Calu3 (cell line): ENCODE measurements at regions of chr2 and their contacts with region 1.

Region 1: DNA sequence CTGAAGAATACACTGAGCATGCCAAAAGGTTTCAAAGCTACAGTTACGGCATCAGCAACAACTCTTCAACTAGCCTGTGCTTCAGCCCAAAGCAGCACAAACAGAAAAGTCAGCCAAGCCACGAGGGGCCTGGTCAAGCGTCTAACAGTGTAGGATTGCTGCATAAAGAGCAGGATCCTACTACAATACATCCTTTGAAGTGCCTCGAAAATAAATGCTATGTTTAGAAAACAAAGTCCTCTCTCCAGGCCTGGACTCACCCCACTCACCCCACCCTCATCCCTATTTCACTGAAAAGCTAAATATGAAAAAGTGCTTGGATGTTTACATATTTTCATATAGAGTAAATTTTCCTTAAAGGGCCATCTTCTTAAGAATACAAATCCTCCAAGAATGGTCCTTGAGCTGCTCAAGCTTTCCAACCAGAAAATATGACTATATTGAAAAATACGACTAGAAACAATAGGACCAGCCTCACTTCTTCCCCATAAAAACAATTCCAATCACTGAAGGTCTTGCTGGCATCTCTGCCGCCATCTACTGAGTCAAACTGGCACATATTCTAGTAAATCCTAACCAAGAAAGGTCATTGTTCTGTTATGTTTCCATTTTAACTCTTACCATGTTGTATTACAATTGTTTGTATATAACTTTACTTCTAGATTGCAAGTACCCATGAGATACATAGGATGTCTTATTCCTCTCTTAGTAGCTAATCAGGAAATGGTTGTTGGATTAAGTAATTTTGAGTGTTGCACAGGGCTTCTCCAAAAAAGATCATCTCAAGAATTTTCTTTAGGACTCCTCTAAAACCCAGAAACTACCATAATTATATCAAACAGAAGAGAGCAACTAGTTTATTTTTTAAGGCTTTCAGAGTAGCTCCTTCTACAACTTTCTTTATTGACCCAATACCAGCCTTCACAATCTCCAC is 63.6 kb downstream of the CLHC1 start:
- DNase-seq: peak; percentile 56
- H3K4me3 Mint-ChIP-seq: no peak overlapping the region
- H3K27ac Mint-ChIP-seq: no peak overlapping the region
- H3K4me1 Mint-ChIP-seq: peaks cover 29% of the 10 kb centered on the region
- H3K27me3 Mint-ChIP-seq: no peaks in the 10 kb centered on the region
- CTCF ChIP-seq: peak; percentile 58

Region 2: DNA sequence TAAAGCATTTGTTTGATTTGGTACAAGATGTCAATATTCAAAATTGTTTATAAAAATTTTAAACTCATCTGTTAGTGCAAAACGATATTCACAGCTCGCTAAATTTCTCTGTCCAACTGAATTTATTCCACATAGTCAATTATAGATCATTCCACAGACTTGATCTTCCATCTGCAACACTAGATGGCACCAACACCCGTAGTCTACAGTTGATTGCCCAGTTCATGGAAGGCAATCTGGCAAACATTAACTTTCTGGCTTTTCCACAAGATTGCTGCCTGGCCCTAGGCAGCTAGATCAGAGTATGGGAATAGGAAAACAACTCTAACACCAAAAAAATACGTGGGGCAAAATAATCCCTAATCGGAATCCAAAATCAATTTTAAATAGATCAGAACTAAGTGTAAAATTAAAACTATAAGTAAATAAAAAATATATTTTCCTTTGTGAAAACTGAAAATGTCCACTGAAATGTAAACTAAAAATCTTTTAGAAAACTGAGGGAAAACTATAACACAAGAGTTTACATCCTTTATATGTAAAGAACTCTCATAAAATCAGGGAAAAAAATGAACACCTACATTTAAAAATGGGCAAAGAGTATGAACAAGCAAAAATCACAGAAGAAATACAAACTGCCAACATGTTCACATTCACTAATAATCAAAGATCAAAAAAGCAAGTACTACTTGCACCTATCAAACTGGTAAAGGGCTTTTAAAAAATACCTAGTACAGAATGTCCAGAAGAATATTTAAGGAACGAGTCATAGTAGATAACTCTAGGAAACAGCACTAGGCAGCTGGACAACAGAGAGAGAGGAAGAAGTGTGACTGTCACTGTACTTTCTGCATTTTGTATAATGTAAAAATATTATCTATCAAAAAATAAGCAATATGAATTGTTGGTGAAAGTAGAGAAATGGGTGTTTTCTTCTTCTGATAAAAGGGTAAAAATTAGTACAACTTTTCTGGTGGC is 153.2 kb before region 1 on chr2:
- CTCF ChIA-PET with region 1: interaction called, 5 read pairs
- intact Hi-C with region 1: loop called (anchors 1 kb)
- DNase-seq: peak; percentile 62
- H3K4me3 Mint-ChIP-seq: peak overlapping the region; percentile 45
- H3K27ac Mint-ChIP-seq: peak overlapping the region; percentile 37
- H3K4me1 Mint-ChIP-seq: peaks cover 59% of the 10 kb centered on the region
- H3K27me3 Mint-ChIP-seq: no peaks in the 10 kb centered on the region
- CTCF ChIP-seq: peak; percentile 56

Region 3: GRCh38 chr2:55050133-55050994 is 118.1 kb before region 1 on chr2 and contains the start of gene RTN4:
- CTCF ChIA-PET with region 1: interaction called, 7 read pairs
- intact Hi-C with region 1: loop called (anchors 1 kb)
- DNase-seq: peak; percentile 99
- H3K4me3 Mint-ChIP-seq: peak within 1 kb of the TSS; percentile 85
- H3K27ac Mint-ChIP-seq: peak within 1 kb of the TSS; percentile 97
- H3K4me1 Mint-ChIP-seq: peaks cover 31% of the 10 kb centered on the region
- H3K27me3 Mint-ChIP-seq: no peaks in the 10 kb centered on the region
- CTCF ChIP-seq: no peak
- total RNA-seq, gene RTN4: 386 and 394 TPM in 2 replicates

Region 4: DNA sequence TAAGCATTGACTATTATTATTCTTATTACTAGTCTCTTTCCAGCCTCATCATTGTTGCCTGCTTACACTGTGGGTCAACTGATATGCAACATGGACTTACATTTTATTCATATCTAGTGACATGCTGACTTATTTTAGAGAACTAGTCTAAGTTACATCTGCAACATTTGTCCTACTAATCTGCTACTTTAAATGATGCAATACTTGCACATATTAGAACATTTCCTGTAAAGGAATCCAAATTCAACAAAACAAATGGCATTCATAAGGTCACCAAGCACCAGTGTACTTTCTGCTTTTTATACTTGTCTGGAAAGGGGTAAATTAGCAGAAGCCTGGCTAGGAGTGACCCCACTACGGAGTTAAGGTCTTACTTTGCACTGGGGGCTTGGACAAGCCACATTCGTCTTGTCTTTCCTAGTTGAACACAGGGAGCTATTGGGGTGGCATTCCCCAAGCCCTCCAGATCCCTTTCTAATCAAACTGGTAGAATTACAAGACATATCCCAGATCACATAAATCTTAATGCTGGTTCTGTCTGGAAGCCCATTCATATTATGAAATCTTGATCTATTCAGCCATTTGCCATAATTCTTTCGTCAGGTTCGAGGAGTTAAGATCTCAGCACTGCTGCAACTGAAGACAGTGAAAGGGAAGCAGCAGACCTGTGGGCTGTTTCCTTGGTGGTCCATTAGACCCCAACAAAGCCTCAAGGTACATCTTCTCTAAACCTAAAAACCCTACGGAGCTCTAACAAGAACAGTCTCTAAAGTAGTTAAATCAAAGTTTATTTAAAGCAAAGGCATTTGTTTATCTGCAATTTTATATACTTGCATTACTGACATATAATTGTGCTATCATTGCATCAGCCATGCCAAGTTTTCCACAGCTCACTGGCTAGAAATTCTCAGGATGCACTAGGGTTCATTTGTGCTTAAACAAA is 68.3 kb before region 1 on chr2:
- CTCF ChIA-PET with region 1: interaction called, 3 read pairs
- intact Hi-C with region 1: loop called (anchors 5 kb)
- DNase-seq: no peak
- H3K4me3 Mint-ChIP-seq: peak overlapping the region; percentile 24
- H3K27ac Mint-ChIP-seq: no peak overlapping the region
- H3K4me1 Mint-ChIP-seq: no peaks in the 10 kb centered on the region
- H3K27me3 Mint-ChIP-seq: no peaks in the 10 kb centered on the region
- CTCF ChIP-seq: no peak